ENCODE measurements at regions of chr7 and their contacts with region 1.

Region 1: GRCh38 chr7:36723951-36724664 is at the start of gene AOAH:
- DNase-seq: peak; percentile 78
- H3K4me3 Mint-ChIP-seq: peak within 1 kb of the TSS; percentile 87
- H3K27ac Mint-ChIP-seq: peak within 1 kb of the TSS; percentile 90
- H3K4me1 Mint-ChIP-seq: peaks cover 73% of the 10 kb centered on the region
- H3K27me3 Mint-ChIP-seq: peaks cover 2% of the 10 kb centered on the region
- total RNA-seq, gene AOAH: 12.3 and 14.0 TPM in 2 replicates

Region 2: DNA sequence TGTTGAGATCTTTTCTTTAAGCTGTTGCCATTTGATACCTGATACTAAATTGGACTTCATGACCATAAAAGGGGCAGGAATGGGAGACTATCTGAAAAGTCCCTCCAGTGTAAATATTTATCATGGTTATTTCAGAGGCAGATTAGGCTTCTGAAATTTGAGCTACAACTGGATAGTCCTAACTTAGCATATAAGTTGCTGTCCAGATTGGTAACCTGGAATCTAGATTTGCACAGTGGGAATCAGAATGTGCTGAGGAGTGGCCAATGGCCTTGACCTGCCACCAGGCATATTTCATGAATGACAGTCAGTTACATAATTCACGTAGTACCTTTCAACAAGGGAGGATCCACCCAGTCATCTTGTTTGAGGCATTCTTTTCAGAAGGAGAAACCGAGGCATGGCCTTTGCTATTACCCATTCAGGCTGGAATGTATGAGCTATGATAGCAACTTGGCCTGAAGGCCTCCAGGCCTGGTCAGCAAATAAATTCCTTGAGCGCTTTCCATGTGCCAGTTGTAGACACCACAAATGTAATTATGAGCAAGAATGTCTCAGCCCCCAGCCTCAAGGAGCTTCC is 491.0 kb before region 1 on chr7:
- intact Hi-C with region 1: no loop called
- DNase-seq: no peak
- H3K4me3 Mint-ChIP-seq: no peak overlapping the region
- H3K27ac Mint-ChIP-seq: no peak overlapping the region
- H3K4me1 Mint-ChIP-seq: no peaks in the 10 kb centered on the region
- H3K27me3 Mint-ChIP-seq: peaks cover 1% of the 10 kb centered on the region

Region 3: GRCh38 chr7:36389371-36390198 is 334.5 kb before region 1 on chr7 and contains the start of gene ANLN:
- intact Hi-C with region 1: loop called (anchors 5 kb)
- DNase-seq: peak; percentile 84
- H3K4me3 Mint-ChIP-seq: peak within 1 kb of the TSS; percentile 86
- H3K27ac Mint-ChIP-seq: peak within 1 kb of the TSS; percentile 78
- H3K4me1 Mint-ChIP-seq: peaks cover 37% of the 10 kb centered on the region
- H3K27me3 Mint-ChIP-seq: peaks cover 12% of the 10 kb centered on the region
- total RNA-seq, gene ANLN: 23.8 and 31.0 TPM in 2 replicates

Region 4: DNA sequence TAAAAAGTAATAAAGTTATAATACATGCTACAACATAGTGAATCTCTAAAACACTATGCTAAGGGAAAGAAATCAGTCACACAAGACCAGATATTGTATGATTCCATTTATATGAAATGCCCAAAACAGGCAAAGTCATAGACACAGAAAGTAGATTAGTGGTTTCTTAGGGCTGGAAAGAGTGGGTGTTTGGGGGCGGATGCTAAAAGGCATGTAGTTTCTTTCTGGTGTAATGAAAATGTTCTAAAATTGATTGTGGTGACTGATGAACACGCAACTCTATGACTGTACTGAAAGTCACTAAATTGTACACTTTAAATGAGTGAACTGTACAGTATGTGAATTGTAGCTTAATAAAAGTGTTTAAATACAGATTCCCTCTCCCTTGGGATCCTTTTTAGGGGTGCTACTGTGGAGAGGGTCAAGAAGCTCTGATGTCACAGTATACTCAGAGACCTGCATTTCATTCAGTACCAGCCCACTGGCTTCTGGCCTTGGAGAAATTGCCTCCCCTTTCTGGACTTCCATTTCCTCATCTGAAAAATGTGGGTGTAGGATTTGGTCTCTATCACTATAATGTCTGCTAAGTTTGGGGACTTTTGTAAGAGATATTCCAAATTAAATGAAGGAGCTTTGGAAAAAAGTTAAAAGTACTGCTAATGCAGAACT is 46.2 kb before region 1 on chr7:
- intact Hi-C with region 1: loop called (anchors 1 kb)
- DNase-seq: no peak
- H3K4me3 Mint-ChIP-seq: peak overlapping the region; percentile 67
- H3K27ac Mint-ChIP-seq: peak overlapping the region; percentile 89
- H3K4me1 Mint-ChIP-seq: peaks cover 56% of the 10 kb centered on the region
- H3K27me3 Mint-ChIP-seq: no peaks in the 10 kb centered on the region

Region 5: GRCh38 chr7:36736899-36737211 is 12.7 kb after region 1 on chr7:
- intact Hi-C with region 1: loop called (anchors 1 kb)
- DNase-seq: no peak
- H3K4me3 Mint-ChIP-seq: peak overlapping the region; percentile 67
- H3K27ac Mint-ChIP-seq: peak overlapping the region; percentile 80
- H3K4me1 Mint-ChIP-seq: peaks cover 41% of the 10 kb centered on the region
- H3K27me3 Mint-ChIP-seq: no peaks in the 10 kb centered on the region

Region 6: GRCh38 chr7:36838616-36839225 is 114.6 kb after region 1 on chr7:
- intact Hi-C with region 1: no loop called
- DNase-seq: no peak
- H3K4me3 Mint-ChIP-seq: no peak overlapping the region
- H3K27ac Mint-ChIP-seq: no peak overlapping the region
- H3K4me1 Mint-ChIP-seq: no peaks in the 10 kb centered on the region
- H3K27me3 Mint-ChIP-seq: peaks cover 12% of the 10 kb centered on the region

Region 7: DNA sequence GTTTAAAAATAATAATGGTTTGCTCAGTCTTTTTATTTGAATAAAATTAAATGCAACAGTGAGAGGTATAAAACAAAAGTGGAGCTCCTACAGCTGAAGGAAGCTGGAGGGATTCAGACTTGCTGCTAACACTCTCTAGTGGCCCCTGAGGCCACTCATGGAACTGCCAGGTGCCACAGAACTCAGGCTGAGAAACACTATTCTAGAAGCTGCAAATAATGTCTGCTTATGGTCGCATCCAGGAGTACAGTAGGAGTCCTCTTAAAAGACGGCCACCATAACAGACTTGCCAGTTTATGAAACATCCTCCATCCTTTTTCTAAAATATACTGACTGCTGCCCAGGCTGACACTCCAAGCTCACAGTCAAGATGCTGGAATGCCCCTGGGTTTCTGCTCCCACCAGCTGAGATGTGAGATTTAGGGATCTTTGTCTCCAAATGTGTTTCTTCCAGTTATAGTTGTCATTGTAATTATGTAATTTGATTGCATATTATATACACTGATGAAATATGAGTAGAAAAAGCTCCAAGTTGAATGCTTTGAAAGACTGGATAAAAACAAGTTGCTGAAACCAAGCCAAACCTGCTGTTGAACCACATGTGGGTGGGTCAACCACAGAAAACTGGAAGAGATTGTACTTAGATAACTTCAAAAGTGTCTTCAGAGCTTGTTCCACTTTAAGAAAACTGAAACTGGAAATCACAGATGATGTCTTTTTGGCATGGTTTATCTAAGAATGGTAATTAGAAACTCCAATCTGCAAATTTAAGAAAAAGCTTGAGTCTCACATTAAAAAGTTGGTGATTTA is 213.9 kb after region 1 on chr7:
- intact Hi-C with region 1: loop called (anchors 1 kb)
- DNase-seq: peak; percentile 59
- H3K4me3 Mint-ChIP-seq: peak overlapping the region; percentile 49
- H3K27ac Mint-ChIP-seq: peak overlapping the region; percentile 65
- H3K4me1 Mint-ChIP-seq: peaks cover 51% of the 10 kb centered on the region
- H3K27me3 Mint-ChIP-seq: no peaks in the 10 kb centered on the region

Region 8: DNA sequence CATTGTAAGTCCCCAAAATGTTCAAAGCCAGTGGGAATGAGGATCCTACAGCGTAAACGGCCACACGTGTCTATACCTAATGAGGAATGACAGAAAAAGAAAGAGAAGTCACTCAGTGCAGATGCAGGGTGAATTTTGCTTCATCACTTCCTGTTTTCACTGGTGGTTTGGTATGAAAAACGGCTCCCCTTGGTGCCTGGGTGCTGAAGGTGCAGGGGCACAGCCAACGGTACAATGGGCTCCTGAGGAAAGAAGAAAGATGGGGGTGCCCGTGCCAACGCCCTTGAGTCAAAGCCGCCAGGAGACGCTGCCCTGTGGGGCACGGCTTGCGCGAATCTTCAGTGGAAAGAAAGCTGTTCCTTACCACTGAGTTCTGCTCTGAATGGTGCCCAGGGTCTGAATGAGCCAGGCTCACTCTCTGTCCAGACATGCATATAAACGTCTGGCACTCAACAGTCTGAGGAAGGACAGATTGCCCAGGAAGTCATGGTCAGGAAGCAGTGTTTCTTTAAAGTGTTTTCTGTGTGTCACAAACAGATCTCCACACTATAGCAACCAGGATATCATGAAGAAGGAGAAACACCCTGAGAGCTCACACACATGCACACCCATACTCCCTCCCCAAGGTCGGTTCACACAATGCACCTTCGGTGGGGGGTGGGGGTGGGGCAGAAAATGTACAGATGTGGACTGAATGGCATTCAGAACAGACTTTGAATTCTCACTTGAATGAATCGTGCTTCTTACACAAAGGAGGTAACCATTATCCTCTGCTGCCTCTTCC is 618.8 kb after region 1 on chr7:
- intact Hi-C with region 1: loop called (anchors 5 kb)
- DNase-seq: peak; percentile 62
- H3K4me3 Mint-ChIP-seq: peak overlapping the region; percentile 96
- H3K27ac Mint-ChIP-seq: peak overlapping the region; percentile 99
- H3K4me1 Mint-ChIP-seq: peaks cover 76% of the 10 kb centered on the region
- H3K27me3 Mint-ChIP-seq: no peaks in the 10 kb centered on the region

Measured in activated T-helper 1 cell treated with anti-CD3 and anti-CD28 coated beads, Interleukin-12 subunit alpha, Interleukin-12 subunit beta, Interleukin-2, Interleukin-4 antibody, amounts not matched to agents 30 ng/mL and 10 ng/mL and 1 ng/mL, durations not matched to agents 14 hours and 24 hours and 36 hours (primary cell).